Right ventricle myocardium inferior (tissue), 1 donor: ENCODE measurements at regions of chr12 and their contacts with region 1.

Region 1: GRCh38 chr12:109995686-109996482 is at the start of gene GIT2:
- DNase-seq: peak; percentile 98
- ATAC-seq: peak; percentile 89
- total RNA-seq, gene GIT2: 47.1 TPM

Region 2: GRCh38 chr12:109861689-109862314 is 134.1 kb before region 1 on chr12:
- intact Hi-C with region 1: no loop called
- DNase-seq: no peak
- ATAC-seq: no peak

Region 3: DNA sequence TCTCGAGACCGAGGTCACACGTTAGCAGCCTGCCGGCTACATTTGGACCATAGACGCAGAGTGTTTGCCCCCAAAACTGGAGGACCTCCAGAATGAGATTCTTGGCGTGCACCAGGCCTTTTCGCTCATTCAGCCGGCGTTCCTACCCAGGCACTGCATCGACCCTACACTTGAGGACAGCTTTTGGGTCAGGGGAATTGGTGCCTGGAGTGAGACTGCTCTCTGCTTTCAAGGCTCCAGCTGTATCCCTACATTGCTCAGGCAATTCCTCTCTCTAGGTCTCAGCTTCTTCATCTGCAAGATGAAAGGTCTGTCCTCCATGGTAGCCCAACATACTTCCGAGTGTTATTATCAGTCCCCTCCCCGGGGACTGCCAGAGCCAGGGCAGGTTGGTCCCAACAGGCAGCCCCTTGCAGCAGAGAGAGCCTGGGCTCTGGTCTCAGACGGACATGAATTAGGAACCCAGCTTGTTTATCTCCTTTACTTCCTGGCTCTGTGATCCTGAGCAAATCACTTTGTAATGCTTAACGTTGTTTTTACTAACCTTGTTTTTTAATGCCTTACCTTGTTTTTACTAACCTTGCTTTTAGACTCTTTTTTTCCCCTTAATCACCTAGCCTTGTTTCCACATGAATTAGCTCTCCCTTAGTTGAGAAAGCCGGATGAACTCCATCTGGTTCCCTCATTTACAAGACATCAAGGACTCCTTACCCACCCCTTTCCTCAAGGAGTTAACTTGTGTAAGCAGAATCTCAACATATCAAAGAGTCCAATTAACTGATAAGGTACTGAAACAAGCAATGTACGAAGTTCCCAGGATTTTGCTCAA is 94.9 kb before region 1 on chr12:
- intact Hi-C with region 1: no loop called
- DNase-seq: no peak
- ATAC-seq: no peak

Region 4: GRCh38 chr12:109934026-109934425 is 61.9 kb before region 1 on chr12:
- intact Hi-C with region 1: no loop called
- DNase-seq: no peak
- ATAC-seq: no peak

Region 5: GRCh38 chr12:109944561-109945359 is 51.1 kb before region 1 on chr12:
- intact Hi-C with region 1: loop called (anchors 10 kb)
- DNase-seq: no peak
- ATAC-seq: peak; percentile 60

Region 6: GRCh38 chr12:109963743-109964429 is 32.0 kb before region 1 on chr12:
- intact Hi-C with region 1: loop called (anchors 5 kb)
- DNase-seq: no peak
- ATAC-seq: peak; percentile 51

Region 7: GRCh38 chr12:110048242-110049027 is 52.6 kb after region 1 on chr12 and contains the start of gene C12orf76:
- intact Hi-C with region 1: loop called (anchors 5 kb)
- DNase-seq: peak; percentile 98
- ATAC-seq: peak; percentile 98
- total RNA-seq, gene C12orf76: 5.3 TPM